Sciatic nerve (tissue), 2 donors: ENCODE measurements at regions of chr10 and their contacts with region 1.

Region 1: DNA sequence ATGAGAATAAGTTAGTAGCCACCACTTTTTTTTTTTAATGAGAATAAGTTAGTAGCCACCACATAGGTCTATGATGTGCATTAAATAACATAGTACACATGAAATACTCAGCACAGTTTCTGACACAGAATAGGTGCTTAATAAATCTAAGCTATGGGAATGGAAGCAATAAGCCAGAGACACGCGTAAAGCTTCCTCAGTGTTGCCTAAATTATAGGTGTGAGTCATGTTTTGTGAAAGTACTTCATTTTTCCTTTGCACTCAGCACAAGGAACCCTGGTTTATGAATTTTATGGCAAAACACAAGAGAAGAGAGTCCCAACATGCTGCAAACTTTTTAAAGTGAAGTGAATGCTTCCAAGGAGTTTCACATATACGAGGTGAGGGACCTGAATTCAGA is 267.4 kb downstream of the RNLS start:
- DNase-seq: no peak
- ATAC-seq: no peak

Region 2: GRCh38 chr10:88293073-88293472 is 22.7 kb before region 1 on chr10:
- intact Hi-C with region 1: loop called (anchors 1 kb)
- DNase-seq: no peak
- ATAC-seq: no peak